Activated CD4-positive, alpha-beta memory T cell treated with anti-CD3 and anti-CD28 coated beads for 36 hours (primary cell): ENCODE measurements at regions of chr6 and their contacts with region 1.

Region 1: GRCh38 chr6:130513770-130514169 is 148.0 kb downstream of the TMEM200A start:
- DNase-seq: peak; percentile 68
- H3K4me3 Mint-ChIP-seq: no peak overlapping the region
- H3K27ac Mint-ChIP-seq: peak overlapping the region; percentile 81
- H3K4me1 Mint-ChIP-seq: peaks cover 65% of the 10 kb centered on the region
- H3K27me3 Mint-ChIP-seq: no peaks in the 10 kb centered on the region

Region 2: DNA sequence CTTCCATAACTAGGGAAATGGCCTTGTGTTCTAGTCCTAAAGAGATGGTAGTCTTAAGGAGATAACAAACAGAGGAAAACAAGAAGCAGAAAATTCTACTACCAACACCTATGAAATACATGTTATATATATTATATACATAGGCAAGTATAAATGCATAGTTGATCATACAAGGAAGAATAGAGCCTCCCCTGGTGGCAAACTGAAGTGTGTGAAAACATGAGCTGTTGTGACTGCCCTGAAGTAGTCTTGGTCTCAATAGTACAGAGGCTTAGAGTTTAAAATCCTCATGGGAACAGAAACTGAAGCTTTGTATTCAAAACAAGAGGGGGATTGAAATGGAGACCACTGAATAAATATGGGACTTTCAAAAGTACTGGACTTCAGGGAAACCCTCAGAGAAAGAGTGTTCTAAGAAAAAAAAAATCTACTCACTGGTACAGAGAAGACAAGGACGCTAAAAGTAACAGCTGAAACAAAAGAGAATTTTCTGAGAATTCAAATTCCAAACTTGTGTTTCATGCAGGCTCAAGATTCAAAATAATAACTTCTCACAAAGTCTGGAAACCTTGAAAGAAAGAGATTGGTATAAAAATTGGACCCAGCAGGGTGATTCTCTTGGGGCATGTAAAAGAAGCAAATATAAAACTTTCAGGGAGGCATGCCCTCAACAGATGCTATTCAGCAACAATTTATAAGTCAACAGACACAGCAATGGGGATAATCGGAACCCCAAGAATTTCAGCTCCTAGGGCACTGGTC is 231.4 kb before region 1 on chr6:
- CTCF ChIA-PET with region 1: no interaction called
- POLR2A ChIA-PET with region 1: no interaction called
- intact Hi-C with region 1: no loop called
- DNase-seq: no peak
- H3K4me3 Mint-ChIP-seq: no peak overlapping the region
- H3K27ac Mint-ChIP-seq: no peak overlapping the region
- H3K4me1 Mint-ChIP-seq: peaks cover 4% of the 10 kb centered on the region
- H3K27me3 Mint-ChIP-seq: no peaks in the 10 kb centered on the region

Region 3: DNA sequence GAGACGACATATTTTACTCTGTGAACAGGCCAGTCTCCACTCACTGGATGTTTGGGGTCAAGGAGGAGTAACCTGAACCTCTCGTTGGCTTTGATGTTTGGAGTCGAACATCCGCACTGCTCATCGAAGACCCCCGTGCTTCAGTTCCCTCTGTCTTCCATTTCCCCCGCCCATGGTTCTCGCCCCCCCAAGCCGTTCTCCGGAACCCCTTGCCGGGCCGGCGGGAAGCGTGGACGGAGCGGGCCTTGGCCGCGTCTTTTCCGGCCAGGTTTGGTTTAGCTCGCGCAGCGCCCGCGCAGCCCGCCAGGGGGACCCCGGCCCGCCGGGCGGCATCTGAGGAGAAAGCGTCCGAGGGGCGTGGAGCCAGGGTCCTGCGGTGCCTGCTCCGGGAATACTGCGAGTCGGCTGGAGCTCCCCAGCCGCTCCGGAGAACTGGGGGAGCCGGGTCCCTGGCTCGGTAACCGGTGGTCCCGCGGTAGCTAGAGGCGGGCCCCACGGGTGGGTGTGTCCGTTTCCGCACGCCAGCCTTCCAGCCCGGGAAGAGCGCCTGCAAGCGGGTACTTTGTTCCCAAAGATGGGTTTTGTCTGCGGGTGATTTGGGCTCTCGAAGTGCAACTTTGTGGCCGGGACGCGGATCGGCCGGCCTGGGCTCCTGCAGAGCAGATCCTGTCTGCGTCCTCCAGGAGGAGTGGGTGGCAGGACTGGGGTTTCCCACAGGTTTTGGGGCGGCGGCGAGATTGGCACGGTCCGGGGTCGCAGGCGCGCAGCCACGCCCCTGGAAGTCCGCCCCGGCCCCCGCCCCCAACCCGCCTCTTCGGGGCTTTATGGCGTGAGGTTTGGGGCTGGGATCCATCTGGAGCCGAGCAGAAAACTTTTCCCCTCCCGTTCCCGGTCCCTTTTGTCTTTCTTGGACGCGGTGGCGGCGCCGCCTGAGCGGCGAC is 148.3 kb before region 1 on chr6 and contains the start of gene TMEM200A:
- CTCF ChIA-PET with region 1: no interaction called
- POLR2A ChIA-PET with region 1: interaction called, 3 read pairs
- intact Hi-C with region 1: loop called (anchors 5 kb)
- DNase-seq: peak; percentile 61
- H3K4me3 Mint-ChIP-seq: peak within 1 kb of the TSS; percentile 76
- H3K27ac Mint-ChIP-seq: no peak within 1 kb of the TSS
- H3K4me1 Mint-ChIP-seq: peaks cover 19% of the 10 kb centered on the region
- H3K27me3 Mint-ChIP-seq: peaks cover 7% of the 10 kb centered on the region
- total RNA-seq, gene TMEM200A: 0.34 to 0.78 TPM

Region 4: GRCh38 chr6:130575971-130576370 is 62.2 kb after region 1 on chr6:
- CTCF ChIA-PET with region 1: interaction called, 3 read pairs
- POLR2A ChIA-PET with region 1: no interaction called
- intact Hi-C with region 1: loop called (anchors 2 kb)
- DNase-seq: peak; percentile 77
- H3K4me3 Mint-ChIP-seq: peak overlapping the region; percentile 23
- H3K27ac Mint-ChIP-seq: peak overlapping the region; percentile 45
- H3K4me1 Mint-ChIP-seq: peaks cover 40% of the 10 kb centered on the region
- H3K27me3 Mint-ChIP-seq: no peaks in the 10 kb centered on the region

Region 5: GRCh38 chr6:130625825-130626527 is 112.2 kb after region 1 on chr6:
- CTCF ChIA-PET with region 1: interaction called, 3 read pairs
- POLR2A ChIA-PET with region 1: no interaction called
- intact Hi-C with region 1: loop called (anchors 2 kb)
- DNase-seq: peak; percentile 31
- H3K4me3 Mint-ChIP-seq: no peak overlapping the region
- H3K27ac Mint-ChIP-seq: no peak overlapping the region
- H3K4me1 Mint-ChIP-seq: peaks cover 22% of the 10 kb centered on the region
- H3K27me3 Mint-ChIP-seq: peaks cover 2% of the 10 kb centered on the region